ENCODE measurements at regions of chr2 and their contacts with region 1.

Region 1: DNA sequence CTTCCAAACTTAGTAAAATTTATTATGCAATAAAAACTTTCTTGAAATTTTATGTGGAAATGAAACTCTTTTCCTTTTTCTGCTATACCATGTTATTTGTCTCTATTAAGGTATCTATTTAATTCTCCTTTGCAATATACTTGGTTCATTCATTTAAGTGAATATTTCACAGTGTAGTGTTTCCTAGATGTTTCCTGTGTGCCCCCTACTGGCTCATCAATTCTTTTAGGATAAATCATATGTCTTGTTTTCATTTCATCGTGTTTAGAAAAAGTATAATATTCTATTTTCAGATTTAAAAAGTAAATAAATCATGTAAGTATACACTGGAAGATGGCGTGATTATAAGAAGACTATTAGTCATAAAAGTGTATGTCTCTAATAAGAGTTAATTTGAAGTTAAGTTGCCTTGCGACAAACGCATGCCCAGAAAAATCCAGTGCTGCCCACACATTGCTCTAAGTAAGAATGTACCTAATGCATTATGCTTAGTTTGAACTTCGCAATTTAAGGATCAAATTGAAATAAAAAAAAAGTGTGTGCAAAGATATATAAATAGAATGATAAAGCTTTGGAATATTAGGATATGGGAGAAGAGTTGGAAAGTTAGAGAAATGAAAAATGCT is 525.4 kb downstream of the KCNJ3 start:
- DNase-seq: peak; percentile 19
- ATAC-seq: peak; percentile 60; the same call in 1 of the 2 replicates
- H3K4me3 ChIP-seq: no peak overlapping the region
- H3K27ac ChIP-seq: no peak overlapping the region
- H3K4me1 ChIP-seq: no peaks in the 10 kb centered on the region
- H3K27me3 ChIP-seq: no peaks in the 10 kb centered on the region
- CTCF ChIP-seq: peak; percentile 71

Region 2: DNA sequence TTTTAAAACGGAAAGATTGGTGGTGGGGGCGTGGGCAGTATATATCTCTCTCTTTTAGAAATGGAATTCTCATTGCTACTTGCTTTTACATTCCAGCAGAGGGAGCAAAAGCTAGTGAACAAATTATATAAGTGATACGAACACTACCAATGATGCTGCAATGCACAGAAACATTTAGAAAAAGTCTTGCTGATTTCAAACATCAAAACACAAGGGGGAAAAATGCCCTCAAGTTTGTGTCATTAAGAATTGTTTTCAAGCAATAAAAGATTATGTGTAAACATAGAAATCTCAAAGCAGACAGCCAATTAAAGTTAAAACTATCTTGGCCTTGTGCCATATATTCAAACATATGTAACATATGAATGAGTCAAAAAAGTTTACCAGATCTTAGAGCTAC is 821.7 kb before region 1 on chr2:
- CTCF ChIA-PET with region 1: no interaction called
- POLR2A ChIA-PET with region 1: no interaction called
- intact Hi-C with region 1: loop called (anchors 10 kb)
- DNase-seq: peak; percentile 41
- ATAC-seq: peak; percentile 66; the same call in 1 of the 2 replicates
- H3K4me3 ChIP-seq: no peak overlapping the region
- H3K27ac ChIP-seq: no peak overlapping the region
- H3K4me1 ChIP-seq: no peaks in the 10 kb centered on the region
- H3K27me3 ChIP-seq: no peaks in the 10 kb centered on the region
- CTCF ChIP-seq: peak; percentile 59

Region 3: DNA sequence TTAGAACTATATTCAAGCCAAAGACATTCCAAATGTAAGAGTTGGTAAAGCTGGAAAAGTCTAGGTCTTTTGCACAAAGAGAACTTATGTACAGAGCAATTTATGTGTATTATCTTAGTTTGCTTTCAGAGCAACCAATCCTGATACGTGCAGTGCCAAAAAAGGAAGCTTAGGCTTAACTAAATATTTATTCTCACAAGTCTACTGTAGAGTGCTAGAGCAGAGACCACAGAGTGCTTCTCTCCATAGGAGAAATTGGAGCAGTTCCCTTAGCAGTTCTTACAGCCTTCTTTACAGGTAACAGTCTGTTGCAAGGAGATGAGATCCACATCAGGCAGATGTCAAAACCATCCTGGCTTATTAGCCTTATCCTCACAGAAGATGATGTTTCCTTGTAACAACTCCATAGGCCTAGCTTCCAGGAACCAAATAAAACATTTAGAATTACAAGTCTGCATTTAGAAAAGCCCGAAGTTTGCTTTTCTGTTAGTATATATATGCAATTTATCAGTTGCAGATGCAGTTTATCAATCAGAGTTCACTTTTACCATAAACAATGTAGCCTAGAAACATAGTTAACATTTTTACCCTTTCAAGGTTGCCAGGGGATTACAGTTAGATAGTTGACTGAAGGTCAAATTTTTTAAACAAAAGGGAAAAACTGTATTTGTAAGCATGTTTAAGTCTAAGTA is 776.0 kb before region 1 on chr2:
- CTCF ChIA-PET with region 1: no interaction called
- POLR2A ChIA-PET with region 1: no interaction called
- intact Hi-C with region 1: loop called (anchors 10 kb)
- DNase-seq: no peak
- ATAC-seq: peak; percentile 54
- H3K4me3 ChIP-seq: no peak overlapping the region
- H3K27ac ChIP-seq: no peak overlapping the region
- H3K4me1 ChIP-seq: no peaks in the 10 kb centered on the region
- H3K27me3 ChIP-seq: no peaks in the 10 kb centered on the region
- CTCF ChIP-seq: no peak

Region 4: GRCh38 chr2:154623819-154624218 is 600.1 kb before region 1 on chr2:
- CTCF ChIA-PET with region 1: no interaction called
- POLR2A ChIA-PET with region 1: no interaction called
- intact Hi-C with region 1: loop called (anchors 1 kb)
- DNase-seq: peak; percentile 49
- ATAC-seq: peak; percentile 85
- H3K4me3 ChIP-seq: no peak overlapping the region
- H3K27ac ChIP-seq: no peak overlapping the region
- H3K4me1 ChIP-seq: no peaks in the 10 kb centered on the region
- H3K27me3 ChIP-seq: no peaks in the 10 kb centered on the region
- CTCF ChIP-seq: peak; percentile 77

Region 5: DNA sequence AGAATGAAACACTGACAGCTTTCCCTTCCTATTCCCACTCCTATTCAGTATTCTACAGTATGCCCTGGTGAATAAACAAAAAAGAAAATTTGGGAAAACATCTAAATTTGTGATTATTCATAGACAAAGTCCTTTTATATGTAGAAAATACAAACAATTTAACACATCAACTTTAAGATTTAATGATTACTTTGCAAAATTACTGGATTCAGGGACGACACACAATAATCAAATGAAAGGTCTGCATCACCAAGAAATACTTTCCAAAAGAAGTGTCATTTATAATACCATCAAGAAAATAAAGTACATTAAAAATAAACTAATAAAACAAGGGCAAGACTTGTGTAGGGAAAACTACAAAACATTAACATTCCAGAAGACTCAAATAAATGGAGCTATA is 325.6 kb before region 1 on chr2:
- CTCF ChIA-PET with region 1: no interaction called
- POLR2A ChIA-PET with region 1: no interaction called
- intact Hi-C with region 1: loop called (anchors 10 kb)
- DNase-seq: no peak
- ATAC-seq: no peak
- H3K4me3 ChIP-seq: no peak overlapping the region
- H3K27ac ChIP-seq: no peak overlapping the region
- H3K4me1 ChIP-seq: no peaks in the 10 kb centered on the region
- H3K27me3 ChIP-seq: no peaks in the 10 kb centered on the region
- CTCF ChIP-seq: no peak

Region 6: GRCh38 chr2:154978710-154979109 is 245.2 kb before region 1 on chr2:
- CTCF ChIA-PET with region 1: no interaction called
- POLR2A ChIA-PET with region 1: no interaction called
- intact Hi-C with region 1: loop called (anchors 5 kb)
- DNase-seq: no peak
- ATAC-seq: no peak
- H3K4me3 ChIP-seq: no peak overlapping the region
- H3K27ac ChIP-seq: no peak overlapping the region
- H3K4me1 ChIP-seq: no peaks in the 10 kb centered on the region
- H3K27me3 ChIP-seq: no peaks in the 10 kb centered on the region
- CTCF ChIP-seq: no peak

Measured in PC-3 (cell line).